ENCODE measurements at regions of chr4 and their contacts with region 1.

Region 1: DNA sequence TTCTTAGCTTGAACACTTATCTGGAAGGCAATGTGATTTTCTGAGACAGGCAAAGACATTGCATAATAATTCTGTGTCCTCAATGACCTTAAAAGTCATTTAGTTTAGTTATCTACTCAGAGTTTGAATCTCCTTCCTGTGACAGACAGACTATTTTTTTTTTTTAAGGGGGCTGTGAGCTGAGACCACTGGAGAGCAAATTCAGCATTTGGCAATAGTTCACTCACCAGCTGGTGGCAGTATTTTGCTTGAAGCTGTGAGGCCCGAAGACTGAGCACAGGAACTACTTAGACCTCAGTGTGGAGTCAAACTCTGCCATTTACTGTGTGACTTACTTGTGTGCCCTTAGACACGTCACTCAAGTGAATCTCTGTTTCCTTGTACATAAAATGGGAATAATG is 22.9 kb upstream of the CPE start:
- DNase-seq: no peak
- ATAC-seq: peak; percentile 23

Region 2: DNA sequence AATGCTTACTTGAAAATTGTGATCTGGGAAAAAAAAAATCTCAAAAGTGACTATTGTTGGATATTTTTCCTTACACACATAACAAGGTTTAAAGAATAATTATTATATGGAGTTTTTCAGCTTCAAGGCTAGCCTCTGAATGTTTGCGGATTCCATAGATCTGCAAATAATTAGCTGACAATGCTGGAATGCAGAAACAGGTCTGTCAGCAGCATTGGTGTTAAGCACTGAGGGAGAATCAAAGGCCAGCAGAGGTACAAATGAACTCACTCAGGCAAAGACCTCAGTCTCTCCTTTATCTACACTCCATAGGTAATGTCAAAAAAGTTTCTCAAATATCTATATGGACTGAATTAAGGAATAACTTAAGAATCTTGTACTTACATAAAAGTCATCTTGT is 566.9 kb before region 1 on chr4:
- intact Hi-C with region 1: no loop called
- DNase-seq: no peak
- ATAC-seq: no peak

Region 3: DNA sequence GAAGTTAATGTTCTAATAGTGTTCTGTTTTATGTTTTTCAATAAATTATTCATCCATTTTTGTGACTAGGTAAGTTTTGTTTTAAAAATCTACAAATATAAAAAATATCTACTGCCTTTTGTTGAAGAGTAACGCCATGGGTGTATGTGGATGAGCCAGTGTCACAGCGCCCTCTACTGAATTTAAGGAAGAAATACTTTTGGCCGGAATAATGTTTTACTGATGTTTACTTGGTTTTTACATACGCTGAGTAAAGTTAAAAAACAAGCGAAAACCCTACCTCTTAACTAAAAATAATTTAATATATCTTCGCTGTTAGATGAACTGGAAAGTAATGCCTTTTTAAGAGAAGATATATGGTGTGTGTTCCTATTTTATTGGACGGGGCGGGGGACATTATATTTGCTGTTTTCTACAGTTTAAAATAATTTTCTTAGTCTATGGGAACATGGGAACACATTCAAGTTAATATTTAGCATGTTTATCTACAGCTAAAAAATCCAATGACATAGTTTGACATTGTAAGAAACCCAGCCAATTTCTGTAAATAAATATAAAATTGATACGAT is 109.0 kb after region 1 on chr4:
- intact Hi-C with region 1: loop called (anchors 5 kb)
- DNase-seq: no peak
- ATAC-seq: no peak